ENCODE measurements at regions of chr10 and their contacts with region 1.

Region 1: GRCh38 chr10:110857265-110858158 is 14.2 kb upstream of the PDCD4 start:
- DNase-seq: no peak
- ATAC-seq: peak; percentile 19
- H3K4me3 ChIP-seq: no peak overlapping the region
- H3K4me3 Mint-ChIP-seq: peak overlapping the region in 9 of 10 donors; percentile 29 to 79 (median 65)
- H3K27ac ChIP-seq: peak overlapping the region; percentile 83
- H3K27ac Mint-ChIP-seq: peak overlapping the region; percentile 67 to 100 (median 97)
- H3K4me1 ChIP-seq: peaks cover 81 to 89% of the 10 kb centered on the region in 2 donors
- H3K4me1 Mint-ChIP-seq: peaks cover 54 to 92% (median 88%) of the 10 kb centered on the region in 7 donors
- H3K27me3 ChIP-seq: no peaks in the 10 kb centered on the region
- H3K27me3 Mint-ChIP-seq: no peaks in the 10 kb centered on the region

Region 2: DNA sequence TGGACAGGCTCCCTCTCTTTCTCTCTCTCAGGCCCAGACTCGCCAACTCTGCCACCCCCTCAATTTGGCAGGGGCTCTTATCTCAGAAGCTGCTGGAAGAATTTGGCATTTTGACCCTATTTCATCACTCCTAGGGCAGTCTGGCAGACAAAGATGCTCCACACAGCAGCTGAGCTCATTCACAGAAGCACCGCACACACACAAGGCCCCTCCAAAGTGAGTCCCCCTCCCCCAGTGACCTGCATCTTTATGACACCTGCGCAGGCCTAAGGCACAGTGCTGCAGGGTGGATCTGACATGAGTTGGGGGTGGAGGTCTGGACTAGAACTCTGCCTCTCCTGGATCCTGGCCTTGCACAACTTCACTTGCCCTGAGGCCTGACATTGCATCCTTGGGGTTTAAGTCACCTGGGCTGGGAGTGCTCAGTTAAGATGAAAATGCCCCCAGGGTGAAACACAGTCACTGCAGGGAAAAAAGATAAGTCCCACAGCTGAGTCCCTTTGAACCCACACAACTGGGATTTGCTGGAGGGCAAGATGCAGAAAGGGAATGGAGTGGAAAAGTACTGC is 400.9 kb before region 1 on chr10:
- CTCF ChIA-PET with region 1: no interaction called
- POLR2A ChIA-PET with region 1: no interaction called
- intact Hi-C with region 1: no loop called
- DNase-seq: no peak
- ATAC-seq: no peak
- H3K4me3 ChIP-seq: no peak overlapping the region
- H3K4me3 Mint-ChIP-seq: no peak overlapping the region
- H3K27ac ChIP-seq: no peak overlapping the region
- H3K27ac Mint-ChIP-seq: no peak overlapping the region
- H3K4me1 ChIP-seq: peaks cover 0 to 40% of the 10 kb centered on the region in 2 donors
- H3K4me1 Mint-ChIP-seq: peaks cover 10 to 35% (median 23%) of the 10 kb centered on the region in 7 donors
- H3K27me3 ChIP-seq: no peaks in the 10 kb centered on the region
- H3K27me3 Mint-ChIP-seq: peaks cover 0 to 12% (median 0%) of the 10 kb centered on the region in 5 donors

Region 3: GRCh38 chr10:110843031-110843430 is 14.5 kb before region 1 on chr10:
- CTCF ChIA-PET with region 1: interaction called, 4 read pairs
- POLR2A ChIA-PET with region 1: interaction called, 63 read pairs
- intact Hi-C with region 1: no loop called
- DNase-seq: peak in 7 of 9 donors; percentile 35 to 60 (median 46)
- ATAC-seq: peak; percentile 88
- H3K4me3 ChIP-seq: no peak overlapping the region
- H3K4me3 Mint-ChIP-seq: peak overlapping the region in 8 of 10 donors; percentile 1 to 67 (median 42)
- H3K27ac ChIP-seq: peak overlapping the region; percentile 40
- H3K27ac Mint-ChIP-seq: peak overlapping the region; percentile 79 to 98 (median 89)
- H3K4me1 ChIP-seq: peaks cover 22 to 27% of the 10 kb centered on the region in 2 donors
- H3K4me1 Mint-ChIP-seq: peaks cover 36 to 67% (median 54%) of the 10 kb centered on the region in 7 donors
- H3K27me3 ChIP-seq: no peaks in the 10 kb centered on the region
- H3K27me3 Mint-ChIP-seq: no peaks in the 10 kb centered on the region

Region 4: GRCh38 chr10:110876788-110877187 is 19.3 kb after region 1 on chr10:
- CTCF ChIA-PET with region 1: interaction called, 5 read pairs
- POLR2A ChIA-PET with region 1: interaction called, 76 read pairs
- intact Hi-C with region 1: loop called (anchors 1 kb)
- DNase-seq: no peak
- ATAC-seq: no peak
- H3K4me3 ChIP-seq: no peak overlapping the region
- H3K4me3 Mint-ChIP-seq: peak overlapping the region in 3 of 10 donors; percentile 27 to 42 (median 36)
- H3K27ac ChIP-seq: peak overlapping the region; percentile 56
- H3K27ac Mint-ChIP-seq: peak overlapping the region in 8 of 9 donors; percentile 38 to 80 (median 68)
- H3K4me1 ChIP-seq: peaks cover 23 to 51% of the 10 kb centered on the region in 2 donors
- H3K4me1 Mint-ChIP-seq: peaks cover 26 to 74% (median 67%) of the 10 kb centered on the region in 7 donors
- H3K27me3 ChIP-seq: no peaks in the 10 kb centered on the region
- H3K27me3 Mint-ChIP-seq: no peaks in the 10 kb centered on the region

Measured in naive thymus-derived CD4-positive, alpha-beta T cell (primary cell).